Activated CD8-positive, alpha-beta T cell treated with anti-CD3 and anti-CD28 coated beads for 36 hours (primary cell): ENCODE measurements at regions of chr11 and their contacts with region 1.

Region 1: GRCh38 chr11:61429691-61430582 is at the starts of genes CPSF7 and SDHAF2:
- DNase-seq: peak; percentile 98
- ATAC-seq: peak; percentile 91
- H3K4me3 Mint-ChIP-seq: peak within 1 kb of the TSS; percentile 98
- H3K27ac Mint-ChIP-seq: peak within 1 kb of the TSS; percentile 99
- H3K4me1 Mint-ChIP-seq: peaks cover 57% of the 10 kb centered on the region
- H3K27me3 Mint-ChIP-seq: no peaks in the 10 kb centered on the region
- CTCF ChIP-seq: no peak
- total RNA-seq, gene CPSF7: 98.5 to 105 TPM
- total RNA-seq, gene SDHAF2: 33.6 to 35.3 TPM

Region 2: DNA sequence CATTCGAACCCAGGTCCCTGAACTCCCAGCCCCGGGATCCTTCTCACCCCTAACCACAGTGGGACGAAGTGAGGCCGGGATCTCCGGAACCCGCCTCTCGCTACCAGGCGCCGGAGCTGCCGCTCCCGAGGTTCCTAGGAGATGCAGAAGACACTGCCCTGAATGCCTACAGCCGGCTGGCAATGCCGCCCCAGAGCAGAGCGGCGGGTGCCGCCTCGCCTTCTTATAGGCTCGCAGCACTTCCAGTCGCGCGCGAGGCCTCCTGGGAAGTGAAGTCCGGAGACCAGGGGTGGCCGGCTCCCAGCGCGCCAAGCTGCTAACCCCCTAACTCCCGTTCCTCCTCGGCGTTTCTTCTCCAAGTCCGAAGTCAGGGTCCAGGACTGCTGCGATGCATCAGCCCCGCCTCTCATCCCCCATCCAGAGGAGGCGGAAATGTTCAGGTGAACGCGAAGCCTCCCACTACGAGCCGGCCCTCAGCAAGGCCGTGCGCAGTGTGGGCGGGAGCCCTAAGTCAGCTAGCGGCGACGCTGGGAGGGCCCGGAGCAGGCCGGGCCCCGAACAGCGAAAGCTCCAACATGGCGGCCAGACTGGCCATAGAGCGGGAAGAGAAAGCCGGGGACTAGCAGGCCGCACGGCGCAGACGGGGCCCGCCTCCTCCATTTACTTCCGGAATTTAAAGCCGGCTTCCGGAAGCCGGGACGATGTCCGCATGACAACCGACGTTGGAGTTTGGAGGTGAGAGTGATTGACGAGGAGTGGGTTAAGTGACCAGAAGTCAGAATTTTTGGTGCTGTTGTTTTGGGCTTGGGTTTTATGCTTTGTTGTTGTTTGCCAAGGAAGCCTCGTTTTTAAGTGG is 68.0 kb before region 1 on chr11 and contains the starts of genes CYB561A3 and TMEM138:
- CTCF ChIA-PET with region 1: interaction called, 17 read pairs
- POLR2A ChIA-PET with region 1: interaction called, 36 read pairs
- intact Hi-C with region 1: no loop called
- DNase-seq: peak; percentile 96
- ATAC-seq: peak; percentile 96
- H3K4me3 Mint-ChIP-seq: peak within 1 kb of the TSS; percentile 99
- H3K27ac Mint-ChIP-seq: peak within 1 kb of the TSS; percentile 99
- H3K4me1 Mint-ChIP-seq: peaks cover 35% of the 10 kb centered on the region
- H3K27me3 Mint-ChIP-seq: no peaks in the 10 kb centered on the region
- CTCF ChIP-seq: no peak
- total RNA-seq, gene CYB561A3: 32.4 to 33.5 TPM
- total RNA-seq, gene TMEM138: 38.6 to 47.0 TPM

Region 3: DNA sequence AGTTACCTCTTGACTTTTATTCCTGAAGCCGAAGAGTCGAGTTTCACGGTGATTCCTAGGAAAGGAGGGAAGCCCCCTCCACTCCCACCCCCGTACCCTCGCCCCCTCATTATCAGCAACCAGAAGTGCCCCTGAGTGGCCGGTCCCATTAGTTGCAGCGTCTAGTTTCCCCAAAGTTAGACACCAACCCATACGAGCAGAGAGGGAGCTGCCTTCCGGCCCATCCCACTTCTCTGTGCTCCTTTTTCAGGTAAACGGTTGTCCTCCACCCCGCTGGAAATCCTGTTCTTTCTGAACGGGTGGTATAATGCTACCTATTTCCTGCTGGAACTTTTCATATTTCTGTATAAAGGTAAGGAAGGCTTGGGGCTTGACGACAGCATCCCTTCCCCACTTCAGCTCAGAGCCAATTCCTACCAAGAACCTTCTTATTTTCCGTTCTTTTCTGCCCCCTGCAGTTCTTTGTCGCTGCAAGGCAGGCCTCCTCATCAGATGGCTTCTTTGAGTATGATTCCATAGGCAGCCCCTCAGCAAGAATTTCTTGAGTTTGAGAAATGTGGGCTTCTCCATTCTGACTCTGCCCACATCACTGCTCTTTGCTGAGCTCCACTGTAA is 36.8 kb before region 1 on chr11:
- CTCF ChIA-PET with region 1: interaction called, 8 read pairs
- POLR2A ChIA-PET with region 1: interaction called, 27 read pairs
- intact Hi-C with region 1: no loop called
- DNase-seq: peak; percentile 35
- ATAC-seq: peak; percentile 41
- H3K4me3 Mint-ChIP-seq: peak overlapping the region; percentile 80
- H3K27ac Mint-ChIP-seq: peak overlapping the region; percentile 88
- H3K4me1 Mint-ChIP-seq: peaks cover 24% of the 10 kb centered on the region
- H3K27me3 Mint-ChIP-seq: no peaks in the 10 kb centered on the region
- CTCF ChIP-seq: peak; percentile 28

Region 4: DNA sequence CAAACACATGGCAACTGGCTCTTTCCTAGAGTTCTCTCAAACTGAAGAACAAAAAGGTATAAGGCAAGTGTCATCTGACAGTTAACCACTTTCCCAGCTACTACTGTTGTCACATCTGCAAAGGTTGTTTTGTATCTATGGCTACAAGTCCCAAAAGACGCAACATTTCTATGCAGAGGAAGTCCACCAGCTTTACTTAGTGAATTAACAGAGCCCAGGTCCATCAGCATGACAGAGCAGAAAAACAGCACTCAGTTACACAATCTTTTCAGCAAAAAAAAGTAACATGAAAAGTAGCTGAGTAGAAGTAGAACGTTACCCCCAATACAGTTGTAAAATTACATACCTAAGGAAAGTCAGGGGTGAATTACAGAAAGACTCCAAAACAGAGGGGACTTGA is 12.3 kb before region 1 on chr11:
- CTCF ChIA-PET with region 1: interaction called, 14 read pairs
- POLR2A ChIA-PET with region 1: interaction called, 12 read pairs
- intact Hi-C with region 1: no loop called
- DNase-seq: no peak
- ATAC-seq: no peak
- H3K4me3 Mint-ChIP-seq: no peak overlapping the region
- H3K27ac Mint-ChIP-seq: peak overlapping the region; percentile 74
- H3K4me1 Mint-ChIP-seq: peaks cover 49% of the 10 kb centered on the region
- H3K27me3 Mint-ChIP-seq: no peaks in the 10 kb centered on the region
- CTCF ChIP-seq: no peak

Region 5: GRCh38 chr11:61460474-61460881 is 30.5 kb after region 1 on chr11:
- CTCF ChIA-PET with region 1: interaction called, 12 read pairs
- POLR2A ChIA-PET with region 1: interaction called, 4 read pairs
- intact Hi-C with region 1: no loop called
- DNase-seq: no peak
- ATAC-seq: no peak
- H3K4me3 Mint-ChIP-seq: no peak overlapping the region
- H3K27ac Mint-ChIP-seq: no peak overlapping the region
- H3K4me1 Mint-ChIP-seq: no peaks in the 10 kb centered on the region
- H3K27me3 Mint-ChIP-seq: no peaks in the 10 kb centered on the region
- CTCF ChIP-seq: no peak

Region 6: DNA sequence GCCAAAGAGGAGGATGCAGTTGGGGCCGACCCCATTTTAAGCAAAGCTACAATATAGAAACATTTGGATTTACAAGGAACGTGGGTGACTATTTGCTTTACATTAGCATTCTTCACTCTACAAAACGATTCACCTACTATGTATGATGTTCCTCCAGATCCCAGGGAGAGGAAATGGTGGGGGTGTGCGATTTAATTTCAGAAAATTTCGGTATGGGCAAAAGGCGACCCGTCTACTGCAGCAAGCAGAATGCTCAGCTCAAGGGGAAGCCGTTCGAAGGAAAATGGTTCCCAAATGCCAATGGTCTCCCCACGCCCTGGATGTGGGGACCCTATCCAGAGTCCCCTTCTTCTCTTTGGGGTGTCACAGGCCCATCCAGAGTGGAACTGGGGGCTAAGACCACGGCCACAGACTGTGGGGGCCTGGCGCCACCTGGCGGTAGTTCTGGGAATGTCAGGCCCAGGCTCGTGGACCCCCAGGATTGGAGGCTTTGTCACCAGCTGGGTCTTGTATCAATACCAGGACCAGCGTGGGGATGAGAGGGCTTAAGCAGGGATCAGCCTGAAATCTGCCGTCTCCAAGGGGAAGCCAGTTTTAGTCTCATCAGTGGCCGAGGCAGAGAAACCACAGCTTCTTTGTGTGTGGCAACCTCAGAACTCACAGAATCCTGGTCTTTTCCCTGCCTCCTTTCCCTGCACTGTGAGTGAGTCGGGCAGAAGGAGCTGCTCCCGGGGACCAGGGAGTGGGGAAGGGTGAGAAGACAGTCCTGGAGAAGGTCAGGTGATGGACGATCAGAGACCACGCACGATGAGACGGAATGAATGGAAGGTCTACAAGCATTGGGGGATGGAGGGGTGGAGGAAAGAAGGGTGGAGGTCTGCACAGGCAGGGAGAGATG is 87.0 kb after region 1 on chr11:
- CTCF ChIA-PET with region 1: interaction called, 22 read pairs
- POLR2A ChIA-PET with region 1: no interaction called
- intact Hi-C with region 1: no loop called
- DNase-seq: peak; percentile 74
- ATAC-seq: peak; percentile 88
- H3K4me3 Mint-ChIP-seq: peak overlapping the region; percentile 1
- H3K27ac Mint-ChIP-seq: no peak overlapping the region
- H3K4me1 Mint-ChIP-seq: peaks cover 6% of the 10 kb centered on the region
- H3K27me3 Mint-ChIP-seq: peaks cover 8% of the 10 kb centered on the region
- CTCF ChIP-seq: peak; percentile 99

Region 7: DNA sequence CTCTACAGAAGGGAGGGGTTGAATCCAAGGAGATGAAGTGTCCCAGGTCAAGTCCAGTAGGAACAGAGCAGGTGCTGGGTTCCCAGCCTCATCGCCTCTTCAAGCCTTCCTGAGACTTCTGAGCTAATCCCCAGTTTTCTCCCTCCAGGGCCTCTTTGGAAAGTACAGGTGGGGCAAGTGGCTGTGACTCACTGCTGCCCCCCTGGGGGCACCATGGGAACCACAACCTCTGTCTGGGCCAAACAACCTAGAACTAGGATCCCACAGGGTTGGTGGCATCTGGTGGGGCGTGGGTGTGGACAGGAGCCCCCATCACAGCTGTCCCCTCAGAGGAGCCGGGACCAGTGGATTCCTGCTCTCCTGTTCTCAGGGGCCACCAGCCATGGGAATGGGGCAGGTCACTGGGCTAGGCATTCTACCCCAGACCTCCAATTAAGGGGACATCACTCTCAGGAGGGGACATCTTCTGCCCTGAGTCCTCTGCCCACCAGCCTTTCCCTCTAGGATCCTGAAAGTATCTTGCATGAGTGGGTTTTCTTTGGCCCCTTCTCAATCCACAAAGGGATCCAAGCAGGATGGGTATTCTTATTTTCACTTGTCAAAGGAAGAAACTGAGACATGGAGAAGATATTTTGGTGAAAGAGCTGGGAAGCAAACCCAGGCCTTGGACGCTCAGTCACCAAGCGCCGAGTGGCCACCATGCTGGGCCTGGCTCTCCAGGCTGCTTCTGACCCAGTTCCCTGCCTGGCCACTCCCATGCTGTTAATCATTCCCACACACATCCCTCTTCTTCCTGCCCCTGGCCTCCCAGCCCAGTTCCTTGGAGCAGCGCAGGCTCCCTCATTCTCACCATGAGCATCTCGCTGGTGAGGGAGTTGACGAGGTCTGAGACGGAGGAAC is 102.5 kb after region 1 on chr11:
- CTCF ChIA-PET with region 1: no interaction called
- POLR2A ChIA-PET with region 1: no interaction called
- intact Hi-C with region 1: no loop called
- DNase-seq: peak; percentile 62
- ATAC-seq: peak; percentile 94
- H3K4me3 Mint-ChIP-seq: no peak overlapping the region
- H3K27ac Mint-ChIP-seq: no peak overlapping the region
- H3K4me1 Mint-ChIP-seq: no peaks in the 10 kb centered on the region
- H3K27me3 Mint-ChIP-seq: peaks cover 14% of the 10 kb centered on the region
- CTCF ChIP-seq: peak; percentile 84

Region 8: GRCh38 chr11:61545341-61545740 is 115.4 kb after region 1 on chr11:
- CTCF ChIA-PET with region 1: no interaction called
- POLR2A ChIA-PET with region 1: no interaction called
- intact Hi-C with region 1: no loop called
- DNase-seq: no peak
- ATAC-seq: peak; percentile 30
- H3K4me3 Mint-ChIP-seq: no peak overlapping the region
- H3K27ac Mint-ChIP-seq: no peak overlapping the region
- H3K4me1 Mint-ChIP-seq: no peaks in the 10 kb centered on the region
- H3K27me3 Mint-ChIP-seq: peaks cover 12% of the 10 kb centered on the region
- CTCF ChIP-seq: no peak